ENCODE measurements at regions of chr21 and their contacts with region 1.

Region 1: DNA sequence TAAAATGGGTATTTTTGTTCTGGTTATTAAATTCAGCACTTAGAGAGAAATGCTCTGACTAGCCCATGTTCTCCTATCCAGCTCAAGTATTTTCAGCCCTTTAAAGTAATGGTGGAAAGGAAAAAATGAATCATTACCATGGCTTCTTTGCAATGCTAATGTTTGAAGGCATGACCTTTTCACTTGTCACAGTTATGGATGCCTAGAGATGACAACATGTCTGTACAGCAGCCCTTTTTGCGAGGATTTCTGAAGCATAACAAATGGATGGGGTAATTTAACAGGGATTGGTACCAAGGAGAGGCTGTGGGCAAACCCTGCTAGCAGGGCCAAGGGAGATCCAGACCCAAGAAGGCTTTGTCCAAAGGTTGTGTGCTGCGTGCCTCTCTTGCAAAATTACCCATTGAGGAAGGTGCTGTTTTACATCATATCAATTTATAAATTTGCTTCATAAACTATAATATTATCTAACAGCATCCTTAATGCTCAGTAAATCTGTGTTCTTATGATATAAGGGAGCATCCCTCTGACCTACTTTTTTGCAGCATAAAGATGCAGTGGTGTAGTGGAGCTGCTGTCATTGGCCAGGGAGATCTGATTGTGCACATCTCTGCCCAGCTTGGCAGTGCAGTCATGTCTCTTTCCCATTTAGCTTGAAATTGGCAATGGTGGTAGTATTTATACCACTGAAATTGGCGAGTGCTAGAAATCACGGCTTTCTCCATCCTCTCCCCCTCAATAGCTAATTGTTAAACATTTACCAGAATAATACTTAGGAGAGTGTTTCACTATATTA is 327.1 kb downstream of the PCP4 start:
- DNase-seq: no peak

Region 2: DNA sequence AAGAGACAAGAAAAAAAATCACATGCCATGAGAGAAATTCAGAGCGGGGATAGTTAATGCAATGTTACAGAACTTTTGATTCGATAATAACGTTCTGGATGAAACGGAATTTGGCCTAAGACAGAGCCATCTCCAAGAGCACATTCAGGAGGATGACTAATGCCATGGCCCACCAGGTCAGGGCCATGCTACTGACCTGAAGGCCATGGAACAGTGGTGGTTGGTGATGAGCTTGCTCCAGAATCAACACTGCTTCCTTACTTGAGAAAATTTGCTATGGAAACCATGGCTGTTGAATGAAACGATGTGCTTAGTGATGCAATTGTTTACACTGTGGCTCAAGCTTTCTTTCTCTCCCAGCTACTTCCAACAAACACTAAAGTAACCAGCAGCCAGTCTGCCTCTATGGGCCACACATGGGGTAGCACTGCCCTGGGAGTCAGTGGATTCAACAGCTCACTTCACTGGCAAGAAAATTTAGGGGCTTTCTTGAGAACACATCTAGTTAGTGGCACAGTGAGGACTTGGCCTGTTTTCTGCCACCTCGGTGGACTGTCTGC is 28.0 kb before region 1 on chr21:
- intact Hi-C with region 1: loop called in 1 of 2 experiments (anchors 1 kb)
- DNase-seq: no peak

Region 3: GRCh38 chr21:40176724-40177123 is 17.7 kb before region 1 on chr21:
- intact Hi-C with region 1: no loop called
- DNase-seq: no peak

Region 4: GRCh38 chr21:40254540-40255465 is 60.4 kb after region 1 on chr21:
- intact Hi-C with region 1: loop called in 1 of 2 experiments (anchors 10 kb)
- DNase-seq: no peak

Region 5: GRCh38 chr21:40433591-40434006 is 239.2 kb after region 1 on chr21:
- intact Hi-C with region 1: no loop called
- DNase-seq: no peak